Motor neuron (in vitro differentiated cells): ENCODE measurements at regions of chr2 and their contacts with region 1.

Region 1: GRCh38 chr2:14428056-14428455 is 204.5 kb upstream of the LRATD1 start:
- ATAC-seq: peak in 2 of 8 experiments; percentile 63 to 66
- H3K4me3 ChIP-seq: no peak overlapping the region
- H3K27ac ChIP-seq: no peak overlapping the region
- H3K4me1 ChIP-seq: no peaks in the 10 kb centered on the region

Region 2: GRCh38 chr2:14261771-14262170 is 166.3 kb before region 1 on chr2:
- in situ Hi-C with region 1: no loop called
- ATAC-seq: no peak
- H3K4me3 ChIP-seq: no peak overlapping the region
- H3K27ac ChIP-seq: no peak overlapping the region
- H3K4me1 ChIP-seq: no peaks in the 10 kb centered on the region

Region 3: DNA sequence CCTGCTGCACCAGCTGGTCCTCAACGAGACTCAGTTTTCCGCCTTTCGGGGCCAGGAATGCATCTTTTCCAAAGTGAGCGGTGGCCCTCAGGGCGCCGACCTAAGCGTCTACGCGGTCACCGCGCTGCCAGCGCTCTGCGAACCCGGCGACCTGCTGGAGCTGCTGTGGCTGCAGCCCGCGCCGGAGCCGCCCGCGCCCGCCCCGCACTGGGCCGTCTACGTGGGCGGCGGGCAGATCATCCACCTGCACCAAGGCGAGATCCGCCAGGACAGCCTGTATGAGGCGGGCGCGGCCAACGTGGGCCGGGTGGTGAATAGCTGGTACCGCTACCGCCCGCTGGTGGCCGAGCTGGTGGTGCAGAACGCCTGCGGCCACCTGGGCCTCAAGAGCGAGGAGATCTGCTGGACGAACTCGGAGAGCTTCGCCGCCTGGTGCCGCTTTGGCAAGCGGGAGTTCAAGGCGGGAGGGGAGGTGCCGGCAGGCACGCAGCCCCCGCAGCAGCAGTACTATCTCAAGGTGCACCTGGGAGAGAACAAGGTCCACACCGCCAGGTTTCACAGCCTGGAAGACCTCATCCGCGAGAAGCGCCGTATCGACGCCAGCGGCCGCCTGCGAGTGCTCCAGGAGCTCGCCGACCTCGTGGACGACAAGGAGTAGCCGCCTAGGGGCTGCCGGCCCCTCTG is 206.3 kb after region 1 on chr2:
- in situ Hi-C with region 1: loop called in 1 of 9 experiments (anchors 25 kb)
- ATAC-seq: peak; percentile 30 to 65 (median 55)
- H3K4me3 ChIP-seq: peak overlapping the region; percentile 48 to 70 (median 55)
- H3K27ac ChIP-seq: peak overlapping the region; percentile 35 to 67
- H3K4me1 ChIP-seq: peaks cover 6 to 7% of the 10 kb centered on the region in 2 donors